A549 (cell line): ENCODE measurements at regions of chr11 and their contacts with region 1.

Region 1: DNA sequence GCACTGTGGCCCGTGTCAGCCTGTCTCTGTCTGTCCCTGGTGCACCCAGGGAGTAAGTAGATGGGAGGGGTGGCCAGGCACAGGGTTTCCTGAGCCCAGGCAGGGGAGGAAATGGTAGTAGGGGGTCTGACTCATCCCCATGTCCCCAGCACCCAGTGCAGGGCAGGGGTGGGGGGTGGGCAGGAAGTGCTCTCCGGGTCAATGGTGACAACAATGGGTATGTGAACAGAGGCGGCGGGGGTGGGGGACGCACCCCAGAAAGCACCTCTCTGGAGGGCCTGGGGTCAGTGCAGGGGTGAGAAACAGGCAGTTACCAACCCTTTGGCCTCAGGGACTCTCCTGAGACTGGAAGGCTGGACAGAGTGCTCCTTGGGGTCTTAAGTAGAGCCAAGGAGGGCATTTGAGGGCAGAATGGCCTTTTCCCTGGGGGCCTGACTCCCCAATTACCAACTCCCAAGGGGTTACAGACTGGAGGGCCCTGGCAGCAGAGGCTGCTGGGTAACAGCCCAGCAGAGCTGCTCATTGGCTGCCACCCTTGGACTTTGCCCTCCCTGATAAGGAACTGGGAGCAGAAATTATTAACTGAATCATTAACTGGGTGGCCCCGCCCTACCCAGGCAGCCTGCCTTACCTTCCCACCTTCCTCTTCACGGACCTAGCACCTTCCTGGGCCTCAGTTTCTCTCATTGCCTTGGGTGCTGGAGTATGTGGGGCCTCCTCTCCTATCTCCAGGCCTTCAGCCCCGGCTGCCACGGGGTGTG is 4.2 kb downstream of the MYRF start:
- DNase-seq: peak; percentile 89 to 94
- ATAC-seq: peak; percentile 55 to 74
- H3K4me3 ChIP-seq: peak overlapping the region; percentile 36
- H3K27ac ChIP-seq: peak overlapping the region; percentile 95 to 99
- H3K4me1 ChIP-seq: peaks cover 80% of the 10 kb centered on the region
- CTCF ChIP-seq: no peak
- EP300 ChIP-seq: peak in 1 of 2 experiments; percentile 43; a peak in 2 of 5 replicates
- POLR2A ChIP-seq: peak; percentile 30; the same call in 1 of the 2 replicates
- RAD21 ChIP-seq: no peak

Region 2: GRCh38 chr11:61769169-61769920 is 12.7 kb after region 1 on chr11:
- CTCF ChIA-PET with region 1: interaction called, 56 read pairs
- POLR2A ChIA-PET with region 1: no interaction called
- DNase-seq: peak in 1 of 2 experiments; percentile 58
- ATAC-seq: peak; percentile 35 to 67; a peak in 3 of 6 replicates
- H3K4me3 ChIP-seq: no peak overlapping the region
- H3K27ac ChIP-seq: peak overlapping the region; percentile 40 to 70; a peak in 5 of 6 replicates
- H3K4me1 ChIP-seq: peaks cover 75% of the 10 kb centered on the region
- CTCF ChIP-seq: 0 out of 3 replicates have a peak, but pooled peaks have one; percentile 12
- EP300 ChIP-seq: no peak
- POLR2A ChIP-seq: no peak
- RAD21 ChIP-seq: peak in 1 of 2 experiments; percentile 7; a peak in 1 of 5 replicates

Region 3: DNA sequence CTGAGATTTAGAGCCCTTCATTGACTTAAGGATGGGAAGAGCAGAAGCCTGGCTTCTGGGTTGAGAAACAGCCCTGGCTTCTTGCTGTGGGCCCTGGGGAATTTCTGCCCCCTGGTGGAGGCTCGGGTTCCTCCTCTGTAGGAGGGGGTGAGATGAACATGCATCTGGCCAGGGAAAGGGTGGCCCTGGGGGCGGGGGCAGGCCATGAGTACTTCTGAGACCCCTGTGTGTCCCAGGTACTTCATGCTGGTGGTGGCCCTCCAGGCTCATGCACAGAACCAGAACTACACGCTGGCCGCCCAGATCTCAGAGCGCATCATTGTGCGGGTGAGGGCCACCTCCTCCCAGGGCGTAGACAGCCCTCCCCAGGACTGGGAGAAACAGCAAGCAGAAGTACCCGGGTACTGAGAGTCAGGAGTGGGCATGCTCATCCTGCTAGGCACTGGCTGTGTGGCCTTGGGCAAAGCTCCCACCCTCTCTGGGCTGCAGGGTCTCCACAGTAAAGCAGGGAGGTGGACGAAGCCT is 20.0 kb after region 1 on chr11:
- CTCF ChIA-PET with region 1: interaction called, 71 read pairs
- POLR2A ChIA-PET with region 1: no interaction called
- DNase-seq: peak; percentile 81 to 94
- ATAC-seq: peak; percentile 61 to 89
- H3K4me3 ChIP-seq: no peak overlapping the region
- H3K27ac ChIP-seq: 0 out of 6 replicates have a peak overlapping the region, but pooled peaks of 1 of the 2 experiments have one; percentile 42
- H3K4me1 ChIP-seq: peaks cover 18% of the 10 kb centered on the region
- CTCF ChIP-seq: peak; percentile 80
- EP300 ChIP-seq: no peak
- POLR2A ChIP-seq: no peak
- RAD21 ChIP-seq: peak; percentile 77 to 85